Posterior vena cava (tissue), 2 donors: ENCODE measurements at regions of chr18 and their contacts with region 1.

Region 1: GRCh38 chr18:37502036-37502435 is 63.6 kb downstream of the CELF4 start:
- DNase-seq: no peak

Region 2: DNA sequence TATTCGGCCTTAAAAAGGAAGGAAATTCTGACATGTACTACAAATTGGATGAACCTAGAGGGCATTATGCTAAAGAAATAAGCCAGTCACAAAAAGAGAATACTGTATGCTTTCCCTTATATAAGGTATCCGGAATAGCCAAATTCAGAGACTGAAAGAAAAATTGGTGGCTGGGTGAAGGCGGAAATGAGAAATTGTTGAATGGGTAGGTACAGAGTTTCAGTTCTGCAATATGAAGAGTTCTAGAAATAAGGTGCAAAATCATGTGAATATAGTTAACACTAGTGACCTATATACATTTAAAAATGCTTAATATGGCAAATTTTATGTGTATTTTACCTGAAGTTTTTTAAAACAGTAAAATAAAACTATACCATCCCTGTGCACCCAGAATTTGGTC is 1486.4 kb before region 1 on chr18:
- intact Hi-C with region 1: loop called in 1 of 2 experiments (anchors 10 kb)
- DNase-seq: no peak

Region 3: DNA sequence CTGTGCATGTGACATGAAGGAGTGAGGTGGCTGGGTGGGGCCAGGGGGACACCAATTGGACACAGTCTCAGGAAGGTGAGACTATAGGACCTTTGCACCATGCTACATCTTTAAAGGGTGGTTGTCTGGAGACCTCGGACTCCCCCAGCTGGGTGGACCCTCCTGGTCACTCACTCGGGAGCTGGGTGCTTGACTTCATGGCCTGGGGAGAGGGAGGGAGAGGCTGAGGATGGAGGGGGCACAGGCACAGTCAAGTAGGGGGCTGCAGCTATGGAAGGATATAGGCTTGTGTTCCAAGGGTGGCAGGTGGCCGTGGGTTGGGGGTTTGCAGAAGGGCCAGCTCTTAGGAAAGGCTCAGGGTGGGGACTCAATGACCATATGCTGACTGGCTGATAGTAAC is 70.7 kb after region 1 on chr18:
- intact Hi-C with region 1: loop called in 1 of 2 experiments (anchors 2 kb)
- DNase-seq: no peak